Head of caudate nucleus (tissue), 42 donors: ENCODE measurements at regions of chr4 and their contacts with region 1.

Region 1: GRCh38 chr4:25159884-25160713 is at the start of gene SEPSECS:
- DNase-seq: peak; percentile 90 to 98 (median 95)

Region 2: DNA sequence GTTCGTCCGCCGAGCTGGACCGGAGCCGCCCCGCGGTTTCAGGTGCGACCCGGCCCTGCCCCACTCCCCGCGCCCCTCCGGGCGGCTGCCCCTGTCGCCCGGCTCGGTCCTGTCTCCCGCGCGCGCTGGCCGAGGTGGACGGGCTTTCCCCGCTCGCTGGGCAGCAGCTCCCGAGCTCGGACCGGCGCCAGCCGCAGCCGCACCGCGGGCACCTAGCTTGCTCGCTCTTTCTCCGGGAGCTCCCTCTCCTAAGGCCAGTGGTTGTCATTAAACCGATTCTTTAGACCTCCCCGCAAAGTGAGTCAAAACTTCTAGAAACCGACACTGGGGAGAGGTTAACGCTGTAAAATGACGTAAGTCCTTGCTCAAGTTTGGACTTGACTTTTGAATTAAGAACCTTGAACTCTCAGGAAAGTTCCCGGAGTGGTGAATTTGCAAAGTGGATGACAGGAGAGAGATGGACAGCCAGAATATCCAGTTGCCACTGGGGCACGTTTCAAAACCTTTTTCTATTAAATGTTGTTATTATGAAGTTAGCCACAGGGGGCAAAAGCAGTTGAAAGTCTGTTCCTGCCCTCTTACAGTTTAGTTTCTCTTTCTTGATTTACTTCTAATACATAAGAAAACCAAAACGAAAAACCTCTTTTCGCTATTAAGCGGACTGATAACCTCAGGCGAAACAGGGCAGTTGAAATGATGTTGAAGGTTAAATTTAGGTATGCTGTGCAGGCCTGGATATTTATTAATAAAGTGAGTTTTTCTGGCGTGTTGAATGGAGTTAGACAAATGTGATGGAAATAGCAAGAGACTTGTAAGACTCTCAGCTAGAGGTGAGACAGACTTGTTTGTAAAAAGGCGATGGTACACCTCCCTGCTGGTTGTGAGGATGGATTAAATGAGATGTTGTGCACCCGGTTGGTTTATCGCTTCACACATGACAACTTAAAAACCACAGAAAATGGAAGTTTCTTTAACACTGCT is 74.6 kb after region 1 on chr4:
- intact Hi-C with region 1: loop called (anchors 5 kb)
- DNase-seq: peak in 39 of 42 donors; percentile 3 to 68 (median 33)

Region 3: DNA sequence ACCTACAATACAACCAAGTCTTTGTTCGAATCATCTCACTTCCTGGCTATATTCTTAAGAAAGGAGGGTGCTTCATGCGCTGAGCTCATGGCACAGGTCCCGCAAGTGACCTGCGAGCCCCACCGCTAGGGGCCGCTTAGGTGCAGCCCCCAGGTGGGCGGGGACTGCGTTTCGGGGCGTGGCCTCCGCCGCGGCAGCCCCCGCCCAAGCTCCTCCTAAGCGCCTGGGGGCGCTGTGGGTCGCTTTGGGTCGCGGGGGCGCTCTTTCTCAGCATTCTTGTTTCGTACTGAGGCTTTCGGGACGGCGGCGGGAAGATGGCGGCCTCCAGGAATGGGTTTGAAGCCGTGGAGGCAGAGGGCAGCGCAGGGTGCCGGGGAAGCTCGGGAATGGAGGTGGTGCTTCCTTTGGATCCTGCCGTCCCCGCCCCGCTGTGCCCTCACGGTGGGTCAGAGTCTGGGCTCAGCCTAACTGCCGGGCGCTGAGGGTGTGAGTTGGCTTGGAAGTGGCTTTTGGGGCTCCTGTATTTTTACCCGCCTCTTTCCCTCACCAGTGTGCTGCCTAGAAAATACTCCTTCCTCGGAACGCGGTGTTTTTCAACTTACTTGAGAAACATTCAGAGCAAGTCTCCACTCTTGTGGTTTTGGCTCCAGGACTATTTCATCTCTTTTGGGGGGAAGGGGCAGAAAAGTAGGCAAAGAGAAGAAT is 152.5 kb after region 1 on chr4 and contains the start of gene ZCCHC4:
- intact Hi-C with region 1: loop called (anchors 5 kb)
- DNase-seq: peak; percentile 87 to 97 (median 93)

Region 4: DNA sequence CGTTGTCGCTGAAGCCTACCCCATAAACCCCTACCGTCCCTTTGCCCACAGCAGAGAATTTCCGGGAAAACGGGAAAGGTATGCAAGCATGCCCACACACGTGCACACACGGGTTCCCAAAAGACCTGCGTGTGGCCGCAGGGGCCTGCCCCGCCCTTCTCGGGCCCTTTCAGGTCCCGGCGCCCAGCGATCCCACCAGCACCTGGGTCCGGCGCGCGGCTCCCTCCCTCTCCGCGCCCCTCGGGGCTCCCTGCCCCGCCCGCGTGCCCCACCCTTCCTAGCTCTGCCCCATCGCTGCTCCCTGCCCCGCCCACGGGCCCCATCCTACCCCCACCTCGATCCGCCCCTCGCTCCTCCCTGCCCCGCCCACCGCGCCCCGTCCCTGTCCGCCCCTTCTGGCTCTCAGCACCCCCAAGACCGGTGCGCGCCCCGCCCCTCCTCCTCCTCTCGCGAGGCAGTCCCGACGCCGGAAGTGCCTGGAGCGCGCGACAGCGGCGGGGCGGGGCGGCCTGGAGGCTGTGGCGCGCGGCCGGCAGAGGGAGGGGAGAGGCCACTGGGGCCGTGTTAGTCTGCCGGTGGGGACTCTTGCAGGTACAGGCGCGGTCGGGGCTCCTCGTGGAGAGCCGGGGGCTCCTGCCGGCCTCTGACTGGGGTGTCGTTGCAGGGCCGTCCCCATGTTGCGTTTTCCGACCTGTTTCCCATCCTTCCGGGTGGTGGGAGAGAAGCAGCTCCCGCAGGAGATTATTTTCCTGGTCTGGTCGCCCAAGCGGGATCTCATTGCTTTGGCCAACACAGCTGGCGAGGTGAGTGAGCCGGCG is 216.9 kb after region 1 on chr4 and contains the start of gene ANAPC4:
- intact Hi-C with region 1: loop called (anchors 10 kb)
- DNase-seq: peak; percentile 67 to 98 (median 92)